MCF 10A (cell line): ENCODE measurements at regions of chr20 and their contacts with region 1.

Region 1: DNA sequence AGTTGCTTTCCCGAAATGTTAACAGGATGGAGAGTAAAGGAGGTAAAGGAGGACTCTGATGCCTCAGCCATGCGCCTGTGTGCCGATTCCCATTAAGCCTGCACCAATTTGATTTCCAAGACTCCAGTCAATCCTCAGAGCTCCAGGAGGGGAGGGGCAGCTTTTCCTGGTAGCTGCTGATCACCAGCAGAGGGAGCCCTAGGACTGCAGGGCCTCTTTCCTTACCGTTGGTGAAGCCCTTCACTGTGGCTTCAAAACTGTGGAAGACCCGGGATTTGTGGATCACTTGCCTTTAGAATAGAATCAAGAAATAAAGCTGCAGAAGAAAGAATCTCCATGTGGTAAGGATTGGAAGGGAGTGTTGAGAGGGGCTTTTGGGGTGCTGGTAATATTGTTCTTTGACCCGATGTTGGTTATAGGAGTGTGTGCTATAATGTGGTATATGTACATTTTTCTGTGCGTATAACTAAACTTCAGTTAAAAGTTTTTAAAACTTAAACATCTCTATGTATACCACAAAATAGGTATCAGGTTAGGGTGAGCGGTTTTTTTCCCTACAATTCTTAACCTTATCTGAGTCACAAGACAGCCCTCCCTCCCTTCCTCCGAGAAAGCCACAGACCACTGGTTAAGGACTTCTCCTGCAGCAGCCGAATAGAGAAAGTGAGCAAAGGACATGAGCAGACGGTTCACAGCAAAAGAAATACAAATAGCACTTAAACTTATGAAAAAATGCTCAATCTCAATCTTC is 6.9 kb upstream of the OSER1 start:
- DNase-seq: peak; percentile 81
- H3K4me3 Mint-ChIP-seq: no peak overlapping the region
- H3K27ac Mint-ChIP-seq: no peak overlapping the region
- H3K4me1 Mint-ChIP-seq: peaks cover 13% of the 10 kb centered on the region
- H3K27me3 Mint-ChIP-seq: no peaks in the 10 kb centered on the region
- CTCF ChIP-seq: peak; percentile 98

Region 2: DNA sequence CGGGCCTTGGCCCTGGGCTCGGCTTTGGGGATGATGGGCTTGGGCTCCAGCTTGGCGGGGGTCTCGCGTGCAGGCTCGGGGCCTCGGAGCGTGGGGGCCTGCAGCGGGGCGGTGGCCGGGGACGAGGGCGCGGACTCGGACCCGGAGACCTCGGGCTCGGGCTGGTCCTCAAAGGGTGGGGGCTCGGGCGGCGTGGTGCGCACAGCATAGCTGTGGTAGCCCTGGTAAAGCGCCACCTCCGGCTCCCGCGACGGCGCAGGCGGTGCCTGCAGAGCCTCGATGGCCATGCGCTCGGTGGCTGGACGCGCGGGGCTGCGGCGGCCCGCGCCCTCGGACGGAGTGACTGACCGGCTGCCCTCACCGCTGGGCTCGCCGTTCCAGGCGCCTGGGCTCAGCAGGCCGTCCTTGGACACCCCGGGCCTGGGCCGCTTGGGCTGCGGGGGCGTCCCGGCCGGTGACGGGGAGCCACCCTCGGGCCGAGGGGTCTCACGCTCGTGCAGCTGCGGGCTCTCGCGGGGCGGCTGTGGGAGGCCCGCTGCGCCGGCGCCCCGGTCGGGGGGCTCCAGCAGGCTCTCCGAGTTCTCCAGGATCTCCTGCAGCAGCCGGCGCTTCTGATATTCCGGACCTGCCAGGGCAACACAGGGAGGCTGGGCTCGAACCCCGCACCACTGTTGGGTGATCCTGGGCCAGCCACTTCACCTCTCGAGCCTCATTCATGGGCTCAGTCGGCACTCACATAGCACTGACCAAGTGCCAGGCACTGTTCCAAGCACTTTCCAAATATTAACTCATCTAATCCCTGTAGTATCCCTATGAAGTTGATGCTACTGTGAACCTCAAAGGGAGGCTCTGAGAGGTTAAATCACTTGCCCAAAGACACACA is 101.5 kb before region 1 on chr20:
- CTCF ChIA-PET with region 1: interaction called, 16 read pairs
- POLR2A ChIA-PET with region 1: interaction called, 3 read pairs
- intact Hi-C with region 1: no loop called
- DNase-seq: no peak
- H3K4me3 Mint-ChIP-seq: no peak overlapping the region
- H3K27ac Mint-ChIP-seq: no peak overlapping the region
- H3K4me1 Mint-ChIP-seq: peaks cover 6% of the 10 kb centered on the region
- H3K27me3 Mint-ChIP-seq: no peaks in the 10 kb centered on the region
- CTCF ChIP-seq: no peak

Region 3: DNA sequence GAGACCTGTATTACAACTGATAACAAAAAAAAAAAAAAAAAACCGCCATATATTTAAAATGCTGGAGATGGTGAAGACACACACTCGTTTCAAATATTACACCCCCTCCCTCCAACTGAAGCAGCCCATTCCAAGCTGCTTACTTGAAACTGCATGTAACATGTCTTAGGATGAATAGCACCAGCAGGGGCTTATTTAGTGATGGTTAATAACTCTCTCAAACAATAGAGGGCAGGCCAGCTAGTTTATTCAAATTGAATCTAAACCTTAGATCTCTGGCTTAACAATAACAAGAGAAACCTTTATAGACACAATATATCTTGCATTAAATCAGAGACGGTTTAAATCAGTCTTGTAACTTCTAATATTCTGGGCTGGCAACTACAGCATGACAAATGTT is 21.2 kb before region 1 on chr20:
- CTCF ChIA-PET with region 1: interaction called, 32 read pairs
- POLR2A ChIA-PET with region 1: no interaction called
- intact Hi-C with region 1: no loop called
- DNase-seq: no peak
- H3K4me3 Mint-ChIP-seq: no peak overlapping the region
- H3K27ac Mint-ChIP-seq: no peak overlapping the region
- H3K4me1 Mint-ChIP-seq: peaks cover 10% of the 10 kb centered on the region
- H3K27me3 Mint-ChIP-seq: peaks cover 11% of the 10 kb centered on the region
- CTCF ChIP-seq: peak; percentile 19

Region 4: DNA sequence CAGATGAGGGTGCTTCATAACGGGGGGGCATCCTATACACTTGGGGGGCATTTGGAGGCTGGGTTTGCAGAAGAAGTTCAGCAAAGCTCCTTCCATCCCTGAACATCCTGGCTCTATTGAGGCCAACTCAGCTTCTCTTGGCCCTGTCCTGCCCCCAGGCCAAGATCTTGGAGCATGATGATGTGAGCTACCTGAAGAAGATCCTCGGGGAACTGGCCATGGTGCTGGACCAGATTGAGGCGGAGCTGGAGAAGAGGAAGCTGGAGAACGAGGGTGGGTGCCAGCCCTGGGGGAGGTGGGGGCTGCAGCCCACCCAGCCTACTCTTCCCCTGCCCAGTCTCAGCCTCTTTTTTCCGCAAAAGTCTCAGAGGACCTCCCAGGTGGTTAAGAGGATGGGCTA is 46.8 kb after region 1 on chr20:
- CTCF ChIA-PET with region 1: interaction called, 22 read pairs
- POLR2A ChIA-PET with region 1: no interaction called
- intact Hi-C with region 1: no loop called
- DNase-seq: peak; percentile 22
- H3K4me3 Mint-ChIP-seq: no peak overlapping the region
- H3K27ac Mint-ChIP-seq: no peak overlapping the region
- H3K4me1 Mint-ChIP-seq: no peaks in the 10 kb centered on the region
- H3K27me3 Mint-ChIP-seq: peaks cover 44% of the 10 kb centered on the region
- CTCF ChIP-seq: no peak

Region 5: DNA sequence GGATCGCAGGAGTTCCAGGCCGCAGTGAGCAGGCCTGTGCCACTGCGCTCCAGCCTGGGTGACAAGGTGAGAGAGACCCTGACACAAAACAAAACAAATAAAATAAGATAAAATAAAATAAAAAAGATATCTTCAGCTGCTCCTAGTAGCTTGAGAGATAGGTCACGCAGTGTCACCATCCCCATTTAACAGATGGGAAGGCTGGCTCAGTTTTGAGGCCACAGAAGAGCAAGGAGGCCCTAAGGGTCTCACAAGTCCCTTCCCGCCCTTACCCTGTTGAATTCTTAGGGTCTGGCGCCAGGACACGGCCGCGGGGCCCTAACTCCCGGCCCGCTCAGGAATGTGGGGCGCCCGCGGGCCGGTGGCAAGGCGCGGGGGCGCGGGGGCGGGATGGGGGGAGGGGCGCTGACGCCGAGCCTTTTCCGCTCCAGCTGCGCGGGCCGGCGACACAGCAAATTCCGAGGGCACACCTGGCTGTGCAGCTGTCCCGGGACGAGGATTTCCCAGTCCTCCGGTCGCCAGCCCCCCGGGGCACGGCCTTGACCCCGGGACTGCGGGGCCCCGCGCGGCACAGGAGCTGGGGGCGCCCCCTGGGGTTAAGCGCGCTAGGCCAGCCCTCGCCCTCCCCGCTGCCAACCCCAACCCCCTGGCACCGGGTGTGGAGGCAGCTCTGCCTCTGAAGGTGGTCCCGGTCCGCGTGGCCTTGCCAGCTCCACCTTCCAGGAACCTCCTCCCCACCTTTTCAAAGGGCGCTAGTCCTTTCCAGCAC is 109.1 kb after region 1 on chr20:
- CTCF ChIA-PET with region 1: interaction called, 73 read pairs
- POLR2A ChIA-PET with region 1: no interaction called
- intact Hi-C with region 1: no loop called
- DNase-seq: no peak
- H3K4me3 Mint-ChIP-seq: peak overlapping the region; percentile 23
- H3K27ac Mint-ChIP-seq: no peak overlapping the region
- H3K4me1 Mint-ChIP-seq: no peaks in the 10 kb centered on the region
- H3K27me3 Mint-ChIP-seq: no peaks in the 10 kb centered on the region
- CTCF ChIP-seq: no peak

Region 6: GRCh38 chr20:44398303-44398702 is 180.8 kb after region 1 on chr20:
- CTCF ChIA-PET with region 1: interaction called, 16 read pairs
- POLR2A ChIA-PET with region 1: interaction called, 3 read pairs
- intact Hi-C with region 1: no loop called
- DNase-seq: peak; percentile 93
- H3K4me3 Mint-ChIP-seq: no peak overlapping the region
- H3K27ac Mint-ChIP-seq: peak overlapping the region; percentile 58
- H3K4me1 Mint-ChIP-seq: peaks cover 10% of the 10 kb centered on the region
- H3K27me3 Mint-ChIP-seq: no peaks in the 10 kb centered on the region
- CTCF ChIP-seq: no peak

Region 7: DNA sequence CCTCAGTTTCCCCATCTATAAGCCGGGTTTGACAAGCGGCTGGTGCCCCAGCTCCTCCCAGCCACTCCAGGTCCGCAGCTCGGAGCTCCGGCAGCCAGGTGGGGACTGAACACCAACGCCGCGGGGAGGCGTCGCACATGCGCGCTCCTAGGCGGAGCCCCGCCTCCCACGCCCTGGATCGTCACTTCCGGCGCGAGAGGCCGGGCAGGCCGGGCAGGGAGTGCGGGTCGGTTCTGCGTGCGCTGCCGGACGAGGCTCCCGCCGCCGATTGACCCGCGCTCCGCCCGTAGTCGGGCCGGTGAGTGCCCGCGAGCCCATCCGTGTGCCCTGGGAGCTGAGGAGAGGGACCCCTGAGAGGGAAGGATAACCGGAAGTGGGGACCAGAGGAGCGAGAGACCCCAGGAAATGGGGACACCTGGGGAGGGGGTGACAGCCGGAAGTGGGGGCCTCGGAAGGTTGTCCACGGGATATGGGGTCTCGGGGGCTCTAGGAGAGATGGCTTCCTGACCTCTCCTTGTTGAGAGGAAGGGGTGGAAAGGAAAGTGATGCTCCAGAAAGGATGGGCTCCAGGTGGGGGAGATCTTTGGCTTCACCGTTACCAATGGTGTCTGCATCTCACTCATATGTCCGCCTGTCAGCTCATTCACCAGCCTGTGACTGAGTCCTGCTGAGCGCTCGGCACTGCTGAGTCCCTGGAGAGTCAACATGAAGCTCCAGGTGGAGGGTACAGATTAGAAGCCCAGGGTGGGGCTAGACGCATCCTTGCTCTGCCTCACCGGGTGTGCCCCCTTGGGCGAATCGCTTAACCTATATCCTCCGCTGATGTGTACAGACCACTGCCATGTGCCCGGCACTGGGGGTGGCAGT is 258.4 kb after region 1 on chr20 and contains the start of gene TTPAL:
- CTCF ChIA-PET with region 1: interaction called, 347 read pairs
- POLR2A ChIA-PET with region 1: interaction called, 27 read pairs
- intact Hi-C with region 1: loop called (anchors 1 kb)
- DNase-seq: peak; percentile 89
- H3K4me3 Mint-ChIP-seq: peak within 1 kb of the TSS; percentile 98
- H3K27ac Mint-ChIP-seq: peak within 1 kb of the TSS; percentile 98
- H3K4me1 Mint-ChIP-seq: peaks cover 23% of the 10 kb centered on the region
- H3K27me3 Mint-ChIP-seq: no peaks in the 10 kb centered on the region
- CTCF ChIP-seq: no peak
- total RNA-seq, gene TTPAL: 34.1 and 35.4 TPM in 2 replicates